Naive thymus-derived CD8-positive, alpha-beta T cell (primary cell): ENCODE measurements at regions of chr1 and their contacts with region 1.

Region 1: GRCh38 chr1:109483672-109484518 is at the start of gene ATXN7L2:
- DNase-seq: peak; percentile 90 to 96 (median 94)
- ATAC-seq: peak; percentile 79 to 80
- H3K4me3 Mint-ChIP-seq: peak within 1 kb of the TSS; percentile 88 to 99 (median 96)
- H3K27ac Mint-ChIP-seq: peak within 1 kb of the TSS; percentile 87 to 96 (median 94)
- H3K4me1 Mint-ChIP-seq: peaks cover 22 to 44% (median 36%) of the 10 kb centered on the region in 4 donors
- H3K27me3 Mint-ChIP-seq: peaks cover 0 to 11% (median 6%) of the 10 kb centered on the region in 5 donors
- polyA plus RNA-seq, gene ATXN7L2: 4.3 to 10.7 (median 8.6) TPM

Region 2: DNA sequence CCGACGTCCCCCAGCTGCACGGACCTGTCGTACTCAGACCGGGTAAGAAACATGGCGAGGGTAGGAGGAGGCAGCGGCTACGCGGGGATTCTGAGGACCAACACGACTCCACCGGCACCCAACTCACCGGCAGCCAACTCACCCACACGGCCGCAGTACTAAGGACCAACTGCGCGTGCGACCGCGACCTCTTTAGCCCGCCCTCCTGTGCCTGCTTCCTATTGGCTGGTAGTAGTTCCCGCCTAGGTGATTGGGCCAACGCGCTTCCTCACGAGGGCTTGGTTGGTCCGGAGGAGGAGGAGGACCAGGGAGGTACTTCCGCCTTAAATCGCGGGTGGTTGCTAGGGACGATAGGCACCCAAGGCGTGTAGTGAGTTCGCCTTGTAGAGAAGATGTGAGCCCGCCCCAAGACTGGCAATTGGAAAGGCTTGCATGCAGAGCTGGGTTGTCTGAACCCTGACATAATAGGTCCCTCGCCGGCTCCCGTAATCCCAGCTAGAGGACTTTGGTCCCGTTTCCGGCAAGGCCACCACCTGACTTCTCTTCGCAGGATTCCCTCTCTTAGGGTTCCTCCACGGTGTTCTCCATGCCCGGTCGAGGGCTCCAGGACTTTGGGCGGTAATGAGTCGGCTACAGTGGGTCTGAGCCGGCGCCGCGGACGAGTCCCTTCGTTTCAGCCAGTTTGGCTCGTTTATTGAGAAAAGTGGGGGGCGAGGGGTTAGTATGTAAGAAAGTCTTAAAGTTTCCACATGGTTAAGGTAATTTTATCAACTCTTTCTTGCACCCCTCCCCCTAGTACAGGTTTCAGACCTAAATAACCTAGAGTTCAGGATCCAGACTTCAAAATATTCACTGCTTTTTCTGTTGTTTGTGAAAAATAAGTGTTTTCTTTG is 57.4 kb before region 1 on chr1 and contains the start of gene PSMA5:
- POLR2A ChIA-PET with region 1: interaction called, 39 read pairs
- DNase-seq: peak; percentile 78 to 98 (median 94)
- ATAC-seq: peak; percentile 91 to 92
- H3K4me3 Mint-ChIP-seq: peak within 1 kb of the TSS; percentile 94 to 99 (median 97)
- H3K27ac Mint-ChIP-seq: peak within 1 kb of the TSS; percentile 77 to 99 (median 98)
- H3K4me1 Mint-ChIP-seq: peaks cover 24 to 43% (median 40%) of the 10 kb centered on the region in 4 donors
- H3K27me3 Mint-ChIP-seq: no peaks in the 10 kb centered on the region
- polyA plus RNA-seq, gene PSMA5: 73.8 to 93.9 (median 84.6) TPM

Region 3: DNA sequence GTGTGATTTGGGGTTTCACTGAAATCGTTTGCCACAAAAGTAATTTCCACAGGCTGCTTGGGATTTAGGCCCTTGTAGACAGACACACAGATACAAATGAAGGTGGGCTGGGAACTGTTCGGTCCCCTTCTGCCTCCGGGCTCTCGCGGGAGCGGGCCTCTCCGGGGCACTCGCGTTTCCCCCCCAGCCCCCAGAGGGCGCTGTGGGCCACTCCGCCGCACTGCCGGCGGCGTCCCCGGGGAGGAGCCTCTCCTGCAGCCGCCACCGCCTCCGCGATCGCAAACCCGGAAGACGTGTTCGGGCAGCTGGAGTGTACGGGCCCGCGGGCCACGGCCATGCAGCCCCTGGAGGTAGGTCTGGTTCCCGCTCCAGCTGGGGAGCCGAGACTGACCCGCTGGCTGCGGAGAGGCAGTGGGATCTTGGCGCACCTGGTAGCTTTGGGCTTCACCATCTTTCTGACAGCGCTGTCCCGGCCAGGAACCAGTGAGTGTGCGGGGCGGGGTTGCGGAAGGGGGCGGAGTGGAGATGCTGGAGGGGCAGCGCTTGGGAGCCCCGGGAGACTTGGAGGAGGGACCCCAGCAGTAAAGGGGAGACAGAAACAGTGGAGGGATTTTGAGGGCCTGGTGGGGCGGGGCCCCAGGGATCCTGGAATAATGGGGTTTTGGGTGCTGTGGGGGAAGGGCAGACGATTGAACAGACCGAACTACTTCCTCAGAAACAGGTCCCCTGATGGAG is 10.1 kb after region 1 on chr1 and contains the start of gene CYB561D1:
- POLR2A ChIA-PET with region 1: interaction called, 337 read pairs
- DNase-seq: peak; percentile 82 to 97 (median 91)
- ATAC-seq: peak; percentile 86 to 90
- H3K4me3 Mint-ChIP-seq: peak within 1 kb of the TSS; percentile 92 to 99 (median 96)
- H3K27ac Mint-ChIP-seq: peak within 1 kb of the TSS; percentile 78 to 97 (median 91)
- H3K4me1 Mint-ChIP-seq: peaks cover 30 to 61% (median 58%) of the 10 kb centered on the region in 4 donors
- H3K27me3 Mint-ChIP-seq: no peaks in the 10 kb centered on the region
- polyA plus RNA-seq, gene CYB561D1: 12.4 to 20.2 (median 13.9) TPM

Region 4: GRCh38 chr1:109499661-109500536 is 16.0 kb after region 1 on chr1:
- POLR2A ChIA-PET with region 1: interaction called, 337 read pairs
- DNase-seq: peak in 9 of 10 donors; percentile 52 to 82 (median 63)
- ATAC-seq: no peak
- H3K4me3 Mint-ChIP-seq: peak overlapping the region; percentile 45 to 96 (median 85)
- H3K27ac Mint-ChIP-seq: peak overlapping the region; percentile 92 to 99 (median 98)
- H3K4me1 Mint-ChIP-seq: peaks cover 45 to 93% (median 91%) of the 10 kb centered on the region in 4 donors
- H3K27me3 Mint-ChIP-seq: no peaks in the 10 kb centered on the region

Region 5: GRCh38 chr1:109509176-109510134 is 25.6 kb after region 1 on chr1 and contains the start of gene AMIGO1:
- POLR2A ChIA-PET with region 1: interaction called, 337 read pairs
- DNase-seq: peak; percentile 46 to 79 (median 68)
- ATAC-seq: peak; percentile 68 to 78
- H3K4me3 Mint-ChIP-seq: peak within 1 kb of the TSS; percentile 90 to 98 (median 96)
- H3K27ac Mint-ChIP-seq: peak within 1 kb of the TSS; percentile 94 to 99 (median 97)
- H3K4me1 Mint-ChIP-seq: peaks cover 38 to 73% (median 68%) of the 10 kb centered on the region in 4 donors
- H3K27me3 Mint-ChIP-seq: no peaks in the 10 kb centered on the region
- polyA plus RNA-seq, gene AMIGO1: 17.8 to 42.2 (median 25.4) TPM

Region 6: DNA sequence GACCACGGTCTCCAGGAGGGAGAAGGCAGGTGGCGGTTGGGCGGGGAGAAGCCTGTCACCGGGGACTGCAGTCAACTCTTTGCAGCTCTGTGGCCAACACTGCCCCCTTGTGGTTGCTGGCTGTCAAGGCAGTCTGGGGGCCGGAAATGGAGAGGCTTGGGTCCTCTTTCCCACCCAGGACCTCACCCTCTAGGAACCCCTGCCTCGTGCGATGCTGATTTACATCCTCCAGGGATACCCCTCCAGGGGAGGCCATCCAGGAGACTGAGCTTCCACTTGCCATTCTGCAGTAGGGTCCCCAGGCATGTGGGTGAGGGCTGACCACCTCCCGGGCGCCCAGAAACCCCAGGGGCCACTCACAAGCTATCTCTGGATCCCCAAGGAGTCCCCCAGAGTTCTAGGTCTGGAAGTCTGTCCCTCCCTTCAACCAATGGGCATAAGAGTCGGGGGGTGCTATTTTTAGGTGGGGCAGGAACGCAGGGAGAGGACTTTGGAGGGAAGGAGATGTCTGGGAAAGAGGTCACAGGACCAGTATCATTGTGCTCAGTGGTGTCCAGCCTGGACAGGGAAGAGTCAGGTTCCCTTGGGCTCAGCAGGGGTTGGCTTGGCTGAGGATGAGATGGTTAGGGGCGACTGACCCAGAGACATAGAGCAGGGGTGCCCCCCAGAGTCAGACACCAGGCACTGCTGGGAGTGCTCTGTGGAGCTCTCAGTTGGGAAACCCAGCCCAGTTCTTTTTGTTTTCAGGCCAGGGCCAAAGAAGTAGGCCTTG is 48.7 kb after region 1 on chr1:
- POLR2A ChIA-PET with region 1: interaction called, 462 read pairs
- DNase-seq: peak; percentile 80 to 97 (median 90)
- ATAC-seq: peak; percentile 85 to 91
- H3K4me3 Mint-ChIP-seq: peak overlapping the region; percentile 69 to 89 (median 85)
- H3K27ac Mint-ChIP-seq: peak overlapping the region; percentile 74 to 96 (median 93)
- H3K4me1 Mint-ChIP-seq: peaks cover 23 to 45% (median 33%) of the 10 kb centered on the region in 4 donors
- H3K27me3 Mint-ChIP-seq: no peaks in the 10 kb centered on the region

Region 7: DNA sequence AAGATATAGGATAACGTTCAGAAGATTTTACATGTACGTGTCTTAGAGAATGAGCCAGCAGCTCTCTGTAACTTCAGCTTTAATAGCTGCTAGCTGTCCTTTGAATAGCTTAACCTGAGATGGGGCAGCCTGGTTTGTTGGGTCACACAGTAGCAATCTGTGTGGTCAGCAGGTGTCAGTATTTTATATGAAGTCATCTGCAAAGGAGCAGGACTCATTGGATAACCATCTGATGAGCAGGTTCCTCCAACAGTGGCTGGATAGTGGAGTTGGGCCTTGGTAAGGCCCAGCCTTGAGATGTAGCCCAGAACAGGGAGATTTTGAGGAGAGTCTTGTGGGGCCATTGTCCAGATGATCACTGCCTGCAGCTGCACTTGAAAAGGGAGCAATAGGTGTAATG is 234.6 kb after region 1 on chr1:
- POLR2A ChIA-PET with region 1: no interaction called
- DNase-seq: no peak
- ATAC-seq: no peak
- H3K4me3 Mint-ChIP-seq: no peak overlapping the region
- H3K27ac Mint-ChIP-seq: no peak overlapping the region
- H3K4me1 Mint-ChIP-seq: peaks cover 0 to 1% (median 0%) of the 10 kb centered on the region in 4 donors
- H3K27me3 Mint-ChIP-seq: peaks cover 2 to 26% (median 15%) of the 10 kb centered on the region in 5 donors

Region 8: GRCh38 chr1:110011527-110012041 is 527.7 kb after region 1 on chr1:
- POLR2A ChIA-PET with region 1: no interaction called
- DNase-seq: peak in 4 of 10 donors; percentile 12 to 37 (median 29)
- ATAC-seq: peak; percentile 86 to 87
- H3K4me3 Mint-ChIP-seq: peak overlapping the region in 1 of 10 donors; percentile 24
- H3K27ac Mint-ChIP-seq: peak overlapping the region in 7 of 10 donors; percentile 6 to 88 (median 57)
- H3K4me1 Mint-ChIP-seq: peaks cover 4 to 18% (median 11%) of the 10 kb centered on the region in 4 donors
- H3K27me3 Mint-ChIP-seq: no peaks in the 10 kb centered on the region